ENCODE measurements at regions of chr14 and their contacts with region 1.

Region 1: DNA sequence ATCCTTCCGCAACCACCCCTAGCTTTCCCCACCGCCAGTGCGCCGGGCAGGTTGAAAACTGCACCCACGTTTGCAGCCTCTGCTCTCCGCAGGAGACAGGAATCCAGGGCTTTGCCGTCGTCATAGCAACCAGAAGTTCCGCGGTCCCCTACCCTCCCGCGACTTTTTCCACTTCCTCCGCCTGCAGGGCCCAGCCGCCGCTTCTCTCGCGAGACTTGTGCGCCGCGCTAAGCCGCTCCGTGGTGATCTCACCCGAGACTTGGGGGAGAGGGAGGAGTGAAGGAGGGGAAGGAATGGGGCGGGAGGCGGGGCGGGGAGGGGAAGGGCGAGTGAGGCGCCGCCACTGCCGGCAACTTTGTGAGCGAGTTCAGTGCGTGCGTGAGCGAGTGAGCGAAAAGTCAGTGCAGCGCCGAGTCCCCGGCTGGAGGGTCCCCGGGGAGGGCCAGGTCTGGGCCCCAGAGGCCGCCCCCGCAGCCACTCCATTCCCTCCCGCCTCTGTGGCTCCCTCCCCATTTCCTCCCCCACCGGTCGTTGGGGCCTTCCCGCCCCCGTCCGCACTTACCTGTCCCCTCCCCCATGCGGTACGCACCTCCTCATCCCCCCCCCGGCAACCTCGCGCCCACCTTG is 413.0 kb downstream of the PCNX1 start:
- DNase-seq: peak; percentile 99
- ATAC-seq: peak; percentile 81
- H3K4me3 ChIP-seq: peak within 1 kb of the TSS; percentile 78 to 96 (median 87)
- H3K4me3 Mint-ChIP-seq: peak within 1 kb of the TSS; percentile 95
- H3K27ac ChIP-seq: peak within 1 kb of the TSS; percentile 97
- H3K27ac Mint-ChIP-seq: peak within 1 kb of the TSS; percentile 97
- H3K4me1 ChIP-seq: peaks cover 38 to 40% of the 10 kb centered on the region in 2 donors
- H3K4me1 Mint-ChIP-seq: peaks cover 42% of the 10 kb centered on the region
- H3K27me3 ChIP-seq: no peaks in the 10 kb centered on the region
- H3K27me3 Mint-ChIP-seq: no peaks in the 10 kb centered on the region
- CTCF ChIP-seq: no peak

Region 2: GRCh38 chr14:71117839-71118743 is 202.1 kb before region 1 on chr14:
- CTCF ChIA-PET with region 1: no interaction called
- POLR2A ChIA-PET with region 1: no interaction called
- intact Hi-C with region 1: loop called (anchors 10 kb)
- DNase-seq: no peak
- ATAC-seq: peak; percentile 37
- H3K4me3 ChIP-seq: no peak overlapping the region
- H3K4me3 Mint-ChIP-seq: no peak overlapping the region
- H3K27ac ChIP-seq: peak overlapping the region in 1 of 2 donors; percentile 78
- H3K27ac Mint-ChIP-seq: peak overlapping the region; percentile 78
- H3K4me1 ChIP-seq: peaks cover 22 to 24% of the 10 kb centered on the region in 2 donors
- H3K4me1 Mint-ChIP-seq: peaks cover 35% of the 10 kb centered on the region
- H3K27me3 ChIP-seq: no peaks in the 10 kb centered on the region
- H3K27me3 Mint-ChIP-seq: no peaks in the 10 kb centered on the region
- CTCF ChIP-seq: no peak

Region 3: GRCh38 chr14:71271166-71271945 is 48.9 kb before region 1 on chr14:
- CTCF ChIA-PET with region 1: no interaction called
- POLR2A ChIA-PET with region 1: no interaction called
- intact Hi-C with region 1: no loop called
- DNase-seq: no peak
- ATAC-seq: no peak
- H3K4me3 ChIP-seq: no peak overlapping the region
- H3K4me3 Mint-ChIP-seq: no peak overlapping the region
- H3K27ac ChIP-seq: no peak overlapping the region
- H3K27ac Mint-ChIP-seq: no peak overlapping the region
- H3K4me1 ChIP-seq: peaks cover 5 to 7% of the 10 kb centered on the region in 2 donors
- H3K4me1 Mint-ChIP-seq: peaks cover 13% of the 10 kb centered on the region
- H3K27me3 ChIP-seq: peaks cover 0 to 4% (median 1%) of the 10 kb centered on the region in 4 experiments
- H3K27me3 Mint-ChIP-seq: peaks cover 5% of the 10 kb centered on the region
- CTCF ChIP-seq: no peak

Region 4: DNA sequence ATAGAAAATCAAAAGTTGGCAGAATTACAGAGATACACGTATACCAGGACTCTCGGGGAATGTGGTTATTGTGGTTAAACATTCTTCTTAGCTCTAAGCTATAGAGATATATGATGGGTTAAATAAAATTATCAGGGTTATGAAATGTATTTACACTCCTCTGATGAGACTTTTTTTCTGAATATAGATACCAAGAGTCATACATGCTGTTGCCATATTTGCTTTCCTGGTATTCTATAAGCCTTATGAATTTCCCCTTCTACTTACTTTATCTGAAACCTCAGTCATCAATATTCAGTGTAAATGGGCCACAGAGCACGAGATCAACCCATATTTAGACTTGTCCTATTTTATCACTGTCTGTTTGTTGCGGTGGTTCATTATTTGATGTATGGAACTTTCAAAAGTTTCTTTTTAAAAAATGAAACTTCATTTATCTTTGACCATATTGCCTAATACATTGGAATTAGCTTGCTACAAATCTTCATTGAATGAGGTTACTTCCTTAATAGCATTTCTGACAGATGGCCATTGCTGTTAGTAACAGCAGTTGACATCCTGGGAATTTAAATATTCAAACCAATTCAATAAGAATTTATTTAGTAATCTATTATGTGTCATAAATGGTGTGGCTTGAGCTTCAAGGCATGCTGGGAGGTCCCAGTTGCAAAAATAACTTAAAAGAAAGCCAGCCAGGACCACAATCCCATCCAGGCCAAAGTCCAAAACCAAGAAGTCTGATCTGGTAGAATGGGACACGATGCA is 19.5 kb before region 1 on chr14:
- CTCF ChIA-PET with region 1: no interaction called
- POLR2A ChIA-PET with region 1: no interaction called
- intact Hi-C with region 1: no loop called
- DNase-seq: no peak
- ATAC-seq: no peak
- H3K4me3 ChIP-seq: no peak overlapping the region
- H3K4me3 Mint-ChIP-seq: no peak overlapping the region
- H3K27ac ChIP-seq: no peak overlapping the region
- H3K27ac Mint-ChIP-seq: no peak overlapping the region
- H3K4me1 ChIP-seq: no peaks in the 10 kb centered on the region
- H3K4me1 Mint-ChIP-seq: no peaks in the 10 kb centered on the region
- H3K27me3 ChIP-seq: no peaks in the 10 kb centered on the region
- H3K27me3 Mint-ChIP-seq: peaks cover 11% of the 10 kb centered on the region
- CTCF ChIP-seq: no peak

Region 5: DNA sequence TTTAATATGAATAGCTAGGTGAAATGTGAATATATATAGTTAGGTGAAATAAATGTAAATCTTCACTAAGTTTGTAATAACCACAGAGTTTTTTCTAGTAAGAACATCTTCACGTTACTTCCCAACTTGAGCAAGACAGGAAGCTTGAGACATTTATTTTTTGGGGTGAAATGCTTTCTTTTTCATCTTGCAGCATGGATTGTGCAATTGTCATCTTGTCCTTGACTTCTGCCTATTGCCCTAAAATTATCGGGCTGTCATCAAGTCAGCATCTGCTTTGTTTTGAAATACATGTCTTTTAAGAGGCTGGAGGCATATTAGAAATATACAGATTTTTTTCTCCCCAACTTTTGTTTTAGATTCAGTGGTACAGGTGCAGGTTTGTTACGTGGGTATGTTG is 20.9 kb after region 1 on chr14:
- CTCF ChIA-PET with region 1: interaction called, 10 read pairs
- POLR2A ChIA-PET with region 1: interaction called, 4 read pairs
- intact Hi-C with region 1: no loop called
- DNase-seq: no peak
- ATAC-seq: no peak
- H3K4me3 ChIP-seq: no peak overlapping the region
- H3K4me3 Mint-ChIP-seq: no peak overlapping the region
- H3K27ac ChIP-seq: no peak overlapping the region
- H3K27ac Mint-ChIP-seq: no peak overlapping the region
- H3K4me1 ChIP-seq: peaks cover 9 to 10% of the 10 kb centered on the region in 2 donors
- H3K4me1 Mint-ChIP-seq: peaks cover 74% of the 10 kb centered on the region
- H3K27me3 ChIP-seq: no peaks in the 10 kb centered on the region
- H3K27me3 Mint-ChIP-seq: no peaks in the 10 kb centered on the region
- CTCF ChIP-seq: no peak

Region 6: GRCh38 chr14:71395151-71395604 is 75.0 kb after region 1 on chr14:
- CTCF ChIA-PET with region 1: interaction called, 249 read pairs
- POLR2A ChIA-PET with region 1: interaction called, 16 read pairs
- intact Hi-C with region 1: loop called (anchors 1 kb)
- DNase-seq: no peak
- ATAC-seq: no peak
- H3K4me3 ChIP-seq: no peak overlapping the region
- H3K4me3 Mint-ChIP-seq: peak overlapping the region; percentile 35
- H3K27ac ChIP-seq: peak overlapping the region; percentile 28 to 97
- H3K27ac Mint-ChIP-seq: peak overlapping the region; percentile 94
- H3K4me1 ChIP-seq: peaks cover 58 to 60% of the 10 kb centered on the region in 2 donors
- H3K4me1 Mint-ChIP-seq: peaks cover 82% of the 10 kb centered on the region
- H3K27me3 ChIP-seq: no peaks in the 10 kb centered on the region
- H3K27me3 Mint-ChIP-seq: no peaks in the 10 kb centered on the region
- CTCF ChIP-seq: no peak

Region 7: DNA sequence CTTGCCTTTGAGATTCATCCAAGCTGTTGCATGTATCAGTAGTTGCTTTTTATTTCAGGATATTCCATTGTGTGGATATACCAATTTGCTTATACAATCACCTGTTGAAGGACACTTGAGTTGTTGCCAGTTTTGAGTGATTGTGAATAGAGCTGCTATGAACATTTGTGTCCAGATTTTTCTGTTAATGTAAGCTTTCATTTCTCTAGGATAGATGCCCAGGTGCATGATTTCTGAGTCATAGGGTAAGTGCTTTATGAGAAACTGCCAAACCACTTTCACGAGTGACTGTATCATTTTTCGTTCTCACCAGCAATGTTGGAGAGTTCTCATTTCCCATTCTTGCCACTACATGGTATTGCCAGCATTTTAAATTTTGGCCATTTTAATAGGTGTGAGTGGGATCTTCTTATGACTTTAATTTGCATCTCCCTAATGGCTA is 177.4 kb after region 1 on chr14:
- CTCF ChIA-PET with region 1: no interaction called
- POLR2A ChIA-PET with region 1: no interaction called
- intact Hi-C with region 1: loop called (anchors 5 kb)
- DNase-seq: peak; percentile 15
- ATAC-seq: no peak
- H3K4me3 ChIP-seq: no peak overlapping the region
- H3K4me3 Mint-ChIP-seq: peak overlapping the region; percentile 29
- H3K27ac ChIP-seq: no peak overlapping the region
- H3K27ac Mint-ChIP-seq: no peak overlapping the region
- H3K4me1 ChIP-seq: peaks cover 17 to 19% of the 10 kb centered on the region in 2 donors
- H3K4me1 Mint-ChIP-seq: peaks cover 38% of the 10 kb centered on the region
- H3K27me3 ChIP-seq: no peaks in the 10 kb centered on the region
- H3K27me3 Mint-ChIP-seq: no peaks in the 10 kb centered on the region
- CTCF ChIP-seq: no peak

Region 8: GRCh38 chr14:71753126-71753830 is 433.1 kb after region 1 on chr14:
- CTCF ChIA-PET with region 1: interaction called, 11 read pairs
- POLR2A ChIA-PET with region 1: no interaction called
- intact Hi-C with region 1: loop called (anchors 5 kb)
- DNase-seq: peak; percentile 78
- ATAC-seq: peak; percentile 78
- H3K4me3 ChIP-seq: no peak overlapping the region
- H3K4me3 Mint-ChIP-seq: no peak overlapping the region
- H3K27ac ChIP-seq: no peak overlapping the region
- H3K27ac Mint-ChIP-seq: no peak overlapping the region
- H3K4me1 ChIP-seq: peaks cover 3 to 4% of the 10 kb centered on the region in 2 donors
- H3K4me1 Mint-ChIP-seq: no peaks in the 10 kb centered on the region
- H3K27me3 ChIP-seq: peaks cover 0 to 5% (median 0%) of the 10 kb centered on the region in 4 experiments
- H3K27me3 Mint-ChIP-seq: peaks cover 6% of the 10 kb centered on the region
- CTCF ChIP-seq: peak; percentile 93

Region 9: DNA sequence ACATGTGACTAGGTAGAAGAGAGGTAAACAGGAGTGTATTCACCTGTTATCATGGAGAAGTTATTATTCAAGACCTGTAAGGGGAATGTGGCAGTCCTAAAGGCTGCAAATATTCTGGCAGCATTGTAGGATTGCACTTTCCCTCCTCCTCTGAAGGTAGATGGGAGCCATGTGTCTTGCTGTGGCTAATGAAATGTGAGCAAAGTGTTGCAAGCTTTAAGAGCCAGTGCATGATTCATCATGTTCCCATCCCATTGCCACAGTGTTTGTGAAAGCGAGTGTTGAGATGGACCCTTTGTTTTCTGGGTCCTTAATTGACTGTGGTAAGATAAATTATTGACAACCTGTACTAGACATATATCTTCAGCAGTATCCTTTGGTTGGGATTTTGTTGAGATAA is 740.7 kb after region 1 on chr14:
- CTCF ChIA-PET with region 1: no interaction called
- POLR2A ChIA-PET with region 1: no interaction called
- intact Hi-C with region 1: no loop called
- DNase-seq: no peak
- ATAC-seq: no peak
- H3K4me3 ChIP-seq: no peak overlapping the region
- H3K4me3 Mint-ChIP-seq: no peak overlapping the region
- H3K27ac ChIP-seq: no peak overlapping the region
- H3K27ac Mint-ChIP-seq: no peak overlapping the region
- H3K4me1 ChIP-seq: no peaks in the 10 kb centered on the region
- H3K4me1 Mint-ChIP-seq: no peaks in the 10 kb centered on the region
- H3K27me3 ChIP-seq: no peaks in the 10 kb centered on the region
- H3K27me3 Mint-ChIP-seq: peaks cover 17% of the 10 kb centered on the region
- CTCF ChIP-seq: no peak

Measured in B cell (primary cell).